Right ventricle myocardium superior (tissue), 1 donor: ENCODE measurements at regions of chr5 and their contacts with region 1.

Region 1: GRCh38 chr5:150656191-150657132 is 4.6 kb upstream of the MYOZ3 start:
- DNase-seq: peak; percentile 85
- ATAC-seq: peak; percentile 76

Region 2: GRCh38 chr5:150361301-150361700 is 295.2 kb before region 1 on chr5:
- intact Hi-C with region 1: no loop called
- DNase-seq: no peak
- ATAC-seq: no peak

Region 3: GRCh38 chr5:150589871-150590601 is 66.4 kb before region 1 on chr5:
- intact Hi-C with region 1: loop called (anchors 5 kb)
- DNase-seq: peak; percentile 82
- ATAC-seq: peak; percentile 85